ENCODE measurements at regions of chr3 and their contacts with region 1.

Region 1: GRCh38 chr3:141360888-141361598 is 7.3 kb upstream of the ZBTB38 start:
- DNase-seq: no peak
- H3K4me3 Mint-ChIP-seq: no peak overlapping the region
- H3K27ac Mint-ChIP-seq: no peak overlapping the region
- H3K4me1 Mint-ChIP-seq: peaks cover 10% of the 10 kb centered on the region
- H3K27me3 Mint-ChIP-seq: peaks cover 4% of the 10 kb centered on the region

Region 2: DNA sequence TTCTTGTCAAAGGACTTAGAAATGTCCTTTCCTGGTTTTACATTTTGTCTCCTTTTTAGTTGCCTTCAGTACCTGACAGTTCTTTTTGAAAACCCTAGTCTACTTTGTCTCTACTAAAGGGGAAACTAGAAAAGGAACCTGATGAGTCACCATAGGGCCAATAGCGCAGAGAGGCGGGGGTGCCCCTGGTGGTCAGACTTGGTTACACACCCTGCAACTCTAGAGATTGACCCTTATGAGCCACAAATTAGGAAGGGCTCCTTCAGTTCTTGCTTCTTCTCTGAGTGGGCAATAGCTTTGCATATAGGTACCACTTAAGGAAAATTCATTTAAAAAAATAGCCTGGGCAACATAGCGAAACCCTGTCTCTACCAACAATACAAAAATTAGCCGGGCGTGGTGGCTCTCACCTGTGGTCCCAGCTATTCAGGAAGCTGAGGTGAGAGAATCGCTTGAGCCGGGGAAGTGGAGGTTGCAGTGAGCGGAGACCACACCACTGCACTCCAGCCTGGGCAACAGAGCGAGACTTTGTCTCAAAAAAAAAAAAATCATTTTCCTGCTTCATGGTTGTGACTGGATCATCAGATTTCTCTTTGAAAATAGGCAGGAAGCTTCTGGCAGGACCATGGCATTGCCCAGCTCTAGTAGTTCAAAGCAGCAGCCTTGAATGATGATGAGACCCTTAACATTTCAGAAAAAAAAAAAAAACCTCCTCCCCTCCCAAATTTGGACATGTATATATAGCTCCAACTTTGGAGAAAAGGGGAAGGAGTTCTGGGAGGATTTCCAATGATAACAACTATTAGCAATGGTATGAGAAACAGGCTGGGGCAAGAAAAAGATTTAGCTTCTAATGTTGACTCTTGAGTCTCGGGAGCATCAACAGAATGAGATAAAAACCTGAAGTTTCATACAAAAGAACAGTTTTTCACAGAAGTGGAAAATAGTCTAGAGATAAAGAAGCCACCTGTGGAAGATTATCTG is 80.6 kb after region 1 on chr3:
- intact Hi-C with region 1: loop called (anchors 1 kb)
- DNase-seq: peak; percentile 50
- H3K4me3 Mint-ChIP-seq: no peak overlapping the region
- H3K27ac Mint-ChIP-seq: no peak overlapping the region
- H3K4me1 Mint-ChIP-seq: peaks cover 16% of the 10 kb centered on the region
- H3K27me3 Mint-ChIP-seq: no peaks in the 10 kb centered on the region

Region 3: DNA sequence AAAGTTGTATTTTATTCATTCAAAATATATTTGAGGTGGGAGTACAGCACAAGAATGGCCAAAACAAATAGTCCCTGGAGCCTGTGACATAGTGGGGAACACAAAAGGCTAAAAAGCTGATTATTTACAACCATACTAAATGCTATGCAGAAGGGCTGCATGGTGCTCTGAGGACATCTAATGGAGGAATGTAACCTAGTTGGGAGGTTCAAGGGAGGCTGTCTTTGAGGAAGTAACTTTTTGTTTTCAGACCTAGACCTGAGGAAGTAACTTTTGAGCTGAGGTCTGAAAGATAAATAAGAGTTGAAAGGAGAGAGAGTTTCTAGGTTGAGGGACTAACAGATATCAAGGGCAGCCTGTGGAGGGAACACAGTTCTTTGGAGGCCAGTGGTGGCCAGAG is 91.0 kb after region 1 on chr3:
- intact Hi-C with region 1: loop called (anchors 1 kb)
- DNase-seq: no peak
- H3K4me3 Mint-ChIP-seq: no peak overlapping the region
- H3K27ac Mint-ChIP-seq: no peak overlapping the region
- H3K4me1 Mint-ChIP-seq: peaks cover 16% of the 10 kb centered on the region
- H3K27me3 Mint-ChIP-seq: no peaks in the 10 kb centered on the region